ENCODE measurements at regions of chr7 and their contacts with region 1.

Region 1: DNA sequence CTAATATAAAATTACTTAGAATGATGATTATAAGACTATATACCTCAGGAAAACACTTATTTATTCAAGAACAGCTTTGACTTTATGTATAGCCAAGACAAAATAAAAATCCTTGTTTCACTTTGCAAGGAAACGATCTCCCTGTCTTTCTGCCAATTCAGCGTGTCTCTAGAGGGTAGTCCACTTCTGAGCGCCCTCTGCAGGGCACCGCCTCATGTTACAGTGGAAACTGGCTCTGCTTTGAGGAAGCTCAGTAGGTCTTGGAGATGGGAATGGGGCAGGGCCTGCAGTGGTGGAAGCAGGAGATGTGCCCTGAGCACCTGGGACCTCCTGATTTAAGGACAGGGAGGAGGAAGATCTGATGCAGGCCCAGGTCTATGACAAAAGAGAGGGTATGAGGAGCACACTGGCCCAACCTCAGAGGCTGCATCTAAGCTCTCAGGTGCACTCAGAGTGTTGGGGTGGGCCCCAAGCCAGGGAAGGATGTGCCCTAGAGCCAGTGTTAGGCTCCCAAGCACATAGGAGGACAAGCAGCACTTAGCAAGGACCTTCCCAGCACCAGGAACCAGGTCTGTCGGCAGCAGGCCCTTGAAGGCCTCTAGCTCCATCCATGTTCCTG is 481.0 kb downstream of the TNS3 start:
- DNase-seq: peak; percentile 5
- ATAC-seq: peak; percentile 83
- H3K4me3 ChIP-seq: no peak overlapping the region
- H3K27ac ChIP-seq: no peak overlapping the region
- H3K4me1 ChIP-seq: no peaks in the 10 kb centered on the region
- H3K27me3 ChIP-seq: no peaks in the 10 kb centered on the region
- CTCF ChIP-seq: peak; percentile 87

Region 2: DNA sequence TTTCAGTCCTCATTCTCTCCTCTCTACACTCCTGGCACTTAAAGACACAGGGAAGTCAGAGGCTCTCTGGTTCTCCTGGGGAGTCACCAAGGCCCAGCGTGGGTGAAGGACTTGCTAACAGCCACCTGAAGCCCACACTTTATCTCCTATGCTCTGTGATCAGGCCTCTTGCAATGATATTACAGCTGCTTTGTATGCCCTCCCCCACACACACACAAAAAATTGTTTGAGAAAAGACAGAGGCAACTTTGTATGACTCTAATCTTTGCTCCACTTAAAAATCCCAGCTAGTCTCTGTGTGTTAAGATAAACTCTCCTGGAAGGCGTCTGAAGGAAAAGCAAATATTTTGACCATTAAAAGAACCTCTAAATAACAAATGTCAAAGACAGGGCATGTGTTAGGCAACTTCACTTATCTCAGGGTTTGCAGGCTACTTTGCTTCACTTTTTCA is 26.2 kb before region 1 on chr7:
- CTCF ChIA-PET with region 1: no interaction called
- POLR2A ChIA-PET with region 1: no interaction called
- in situ Hi-C with region 1: no loop called
- intact Hi-C with region 1: loop called (anchors 2 kb)
- DNase-seq: no peak
- ATAC-seq: no peak
- H3K4me3 ChIP-seq: no peak overlapping the region
- H3K27ac ChIP-seq: no peak overlapping the region
- H3K4me1 ChIP-seq: no peaks in the 10 kb centered on the region
- H3K27me3 ChIP-seq: no peaks in the 10 kb centered on the region
- CTCF ChIP-seq: no peak

Region 3: DNA sequence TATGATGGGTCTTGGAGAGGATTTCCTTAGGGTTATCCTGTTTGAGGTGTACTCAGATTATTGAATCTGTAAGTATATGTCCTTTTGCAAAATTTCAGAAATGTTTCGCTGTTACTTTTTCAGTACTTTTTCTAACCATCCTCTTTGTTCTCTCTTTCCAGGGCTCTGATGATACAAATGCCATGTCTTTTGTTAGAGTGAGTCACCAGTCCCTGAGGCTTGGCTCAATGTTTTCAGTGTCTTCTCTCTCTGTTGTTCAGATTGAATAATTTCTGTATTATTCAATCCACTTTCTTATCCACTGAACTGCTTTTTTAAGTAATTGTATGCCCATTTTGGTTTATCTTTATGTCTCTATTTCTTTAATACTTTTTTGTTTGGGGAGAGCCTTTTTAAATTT is 31.5 kb after region 1 on chr7:
- CTCF ChIA-PET with region 1: no interaction called
- POLR2A ChIA-PET with region 1: no interaction called
- in situ Hi-C with region 1: no loop called
- intact Hi-C with region 1: no loop called
- DNase-seq: no peak
- ATAC-seq: no peak
- H3K4me3 ChIP-seq: no peak overlapping the region
- H3K27ac ChIP-seq: no peak overlapping the region
- H3K4me1 ChIP-seq: no peaks in the 10 kb centered on the region
- H3K27me3 ChIP-seq: peaks cover 26% of the 10 kb centered on the region
- CTCF ChIP-seq: no peak

Region 4: DNA sequence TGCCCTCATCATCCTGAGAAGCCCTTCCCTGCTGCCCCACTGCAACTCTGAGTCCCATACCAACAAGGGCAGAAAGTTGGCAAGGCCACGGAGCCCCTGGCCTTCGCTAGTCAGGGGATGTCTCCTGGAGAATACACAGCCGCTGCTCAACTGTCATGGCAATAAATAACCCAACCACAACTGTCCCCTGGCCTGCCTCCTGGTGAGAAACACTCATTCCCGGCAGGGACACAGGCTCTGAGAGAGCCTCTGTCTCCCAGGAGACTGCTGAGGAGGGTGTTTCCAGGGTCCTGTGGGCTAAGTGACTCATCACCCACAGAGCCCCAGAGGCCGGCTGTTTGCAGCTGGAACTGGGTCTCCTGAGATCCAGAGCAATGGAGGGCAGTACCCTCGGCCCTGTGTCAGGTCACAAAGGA is 126.8 kb after region 1 on chr7:
- CTCF ChIA-PET with region 1: no interaction called
- POLR2A ChIA-PET with region 1: no interaction called
- in situ Hi-C with region 1: no loop called
- intact Hi-C with region 1: no loop called
- DNase-seq: no peak
- ATAC-seq: peak; percentile 50; the same call in 1 of the 2 replicates
- H3K4me3 ChIP-seq: no peak overlapping the region
- H3K27ac ChIP-seq: no peak overlapping the region
- H3K4me1 ChIP-seq: no peaks in the 10 kb centered on the region
- H3K27me3 ChIP-seq: peaks cover 2% of the 10 kb centered on the region; the same call in 1 of the 2 replicates
- CTCF ChIP-seq: no peak